RWPE1 (cell line): ENCODE measurements at regions of chr1 and their contacts with region 1.

Region 1: DNA sequence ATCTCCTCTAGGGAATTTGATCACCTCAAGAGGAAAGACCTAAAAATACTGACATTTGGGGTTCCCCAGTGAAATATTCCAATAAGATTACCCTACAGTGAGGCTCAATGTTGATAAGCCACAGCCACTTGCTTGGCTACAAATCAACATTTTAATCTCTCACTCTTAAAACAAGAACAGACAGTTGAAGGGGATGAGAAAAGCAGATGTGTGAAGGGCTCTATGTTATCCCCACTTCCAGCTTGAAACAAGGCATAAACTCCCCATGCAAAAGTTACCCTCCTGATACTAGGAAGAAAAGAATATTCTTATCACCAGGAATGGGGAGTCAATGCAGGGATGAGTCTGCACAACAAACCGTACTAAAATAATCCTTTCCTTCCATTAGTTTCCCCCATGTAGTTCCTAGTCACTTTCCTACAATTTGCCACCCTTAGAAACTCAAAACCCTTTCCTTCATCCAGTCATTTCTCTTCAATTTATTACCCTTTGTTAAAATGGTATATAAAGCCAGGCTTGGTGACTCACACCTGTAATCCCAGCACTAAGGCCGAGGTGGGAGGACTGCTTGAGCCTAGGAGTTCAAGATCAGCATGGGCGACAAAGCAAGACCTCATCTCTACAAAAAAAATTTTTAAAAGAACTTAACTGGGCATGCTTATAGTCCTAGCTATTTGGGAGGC is 29.5 kb downstream of the LPGAT1 start:
- DNase-seq: no peak
- H3K27ac ChIP-seq: no peak overlapping the region
- CTCF ChIP-seq: no peak

Region 2: DNA sequence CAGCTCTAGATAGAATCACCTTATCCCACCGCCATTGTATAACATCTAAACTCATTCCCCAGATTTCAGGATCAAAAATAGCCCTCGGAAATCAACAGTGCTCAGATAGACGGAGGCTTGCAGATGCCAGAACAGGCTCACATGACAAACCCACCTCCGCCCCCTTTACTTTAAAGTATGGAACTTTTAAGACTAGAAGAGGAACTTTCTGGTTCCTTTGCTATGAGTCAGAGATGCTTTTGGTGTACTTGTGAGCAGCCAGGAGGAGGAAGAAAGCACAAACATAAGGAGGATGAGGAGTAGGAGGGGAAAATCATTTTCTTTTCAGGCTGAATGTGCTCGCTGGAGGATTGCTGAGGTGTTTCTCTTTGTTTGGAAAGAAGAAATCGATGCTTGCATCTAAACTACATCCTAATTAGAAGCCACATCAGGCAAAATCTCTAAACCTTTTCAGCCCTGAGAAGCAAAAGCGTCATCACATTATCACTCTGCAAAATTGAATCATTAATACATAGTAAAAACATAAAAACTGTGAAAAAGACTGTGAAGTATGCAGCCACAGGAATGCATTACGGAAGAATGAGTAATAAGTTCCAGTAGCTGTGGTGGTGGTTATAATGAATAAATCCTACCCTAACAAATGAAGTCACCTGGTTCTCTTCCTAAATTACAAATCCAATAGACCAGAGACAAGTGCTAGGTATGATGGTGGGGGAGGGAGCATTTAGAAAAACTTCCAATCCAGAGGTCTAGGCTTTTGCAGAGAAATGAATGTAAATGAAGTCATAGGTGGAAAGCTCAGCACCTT is 918.4 kb before region 1 on chr1:
- CTCF ChIA-PET with region 1: no interaction called
- POLR2A ChIA-PET with region 1: interaction called, 18 read pairs
- DNase-seq: peak; percentile 73
- H3K27ac ChIP-seq: no peak overlapping the region
- CTCF ChIP-seq: no peak

Region 3: GRCh38 chr1:211788626-211789025 is 12.4 kb before region 1 on chr1:
- CTCF ChIA-PET with region 1: no interaction called
- POLR2A ChIA-PET with region 1: no interaction called
- DNase-seq: no peak
- H3K27ac ChIP-seq: no peak overlapping the region
- CTCF ChIP-seq: no peak